Breast epithelium (tissue), 4 donors: ENCODE measurements at regions of chr14 and their contacts with region 1.

Region 1: GRCh38 chr14:31712244-31713127 is 151.3 kb downstream of the NUBPL start:
- DNase-seq: no peak
- H3K4me3 ChIP-seq: no peak overlapping the region
- H3K27ac ChIP-seq: no peak overlapping the region
- H3K4me1 ChIP-seq: no peaks in the 10 kb centered on the region
- H3K27me3 ChIP-seq: no peaks in the 10 kb centered on the region
- CTCF ChIP-seq: no peak
- POLR2A ChIP-seq: no peak

Region 2: GRCh38 chr14:31672709-31673108 is 39.8 kb before region 1 on chr14:
- intact Hi-C with region 1: loop called (anchors 2 kb)
- DNase-seq: no peak
- H3K4me3 ChIP-seq: no peak overlapping the region
- H3K27ac ChIP-seq: no peak overlapping the region
- H3K4me1 ChIP-seq: no peaks in the 10 kb centered on the region
- H3K27me3 ChIP-seq: no peaks in the 10 kb centered on the region
- CTCF ChIP-seq: no peak
- POLR2A ChIP-seq: no peak